Activated naive CD4-positive, alpha-beta T cell treated with anti-CD3 and anti-CD28 coated beads for 36 hours (primary cell): ENCODE measurements at regions of chr15 and their contacts with region 1.

Region 1: GRCh38 chr15:60585743-60586708 is 107.1 kb upstream of the ICE2 start:
- DNase-seq: peak; percentile 78
- H3K4me3 Mint-ChIP-seq: peak overlapping the region; percentile 30
- H3K27ac Mint-ChIP-seq: peak overlapping the region; percentile 69
- H3K4me1 Mint-ChIP-seq: peaks cover 77% of the 10 kb centered on the region
- H3K27me3 Mint-ChIP-seq: no peaks in the 10 kb centered on the region

Region 2: DNA sequence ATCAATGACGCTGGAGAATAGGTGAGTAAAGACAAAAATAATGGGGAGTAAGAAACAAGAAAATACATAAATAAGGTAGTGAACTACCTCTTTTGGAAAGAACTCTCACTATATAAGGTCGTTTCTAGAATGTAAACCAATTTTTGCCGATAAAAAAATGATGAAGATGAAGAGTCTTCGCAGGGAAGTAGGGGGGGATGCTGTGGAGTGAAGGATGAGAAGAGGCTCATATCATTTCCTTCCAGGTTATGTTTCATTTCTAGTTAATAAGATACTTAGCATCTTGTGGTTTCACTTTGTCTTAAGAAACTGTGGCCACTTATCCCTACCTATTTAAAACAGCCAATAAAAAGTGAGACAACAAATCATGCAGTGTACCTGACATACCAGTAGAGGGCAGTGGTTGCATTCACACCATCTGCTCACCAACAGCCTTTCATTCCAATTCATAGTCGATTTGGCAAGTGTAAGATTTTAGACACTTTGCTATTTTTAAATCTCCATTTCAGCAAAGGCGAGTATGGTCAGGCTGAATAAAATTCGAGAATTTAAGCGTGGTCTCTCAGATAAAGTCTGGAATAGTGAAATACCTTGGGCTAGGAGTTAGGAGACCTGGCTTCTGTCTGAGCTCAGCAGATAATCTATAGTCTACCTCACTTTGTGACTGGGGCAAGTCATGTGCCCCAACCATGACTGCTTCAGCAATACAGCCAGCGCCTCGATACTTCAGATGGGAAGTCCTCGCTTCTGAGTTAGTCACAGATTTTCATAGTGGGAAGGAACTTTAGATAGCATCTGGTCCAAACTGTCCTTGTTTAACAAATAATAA is 78.2 kb before region 1 on chr15:
- CTCF ChIA-PET with region 1: interaction called, 8 read pairs
- intact Hi-C with region 1: loop called (anchors 1 kb)
- DNase-seq: peak; percentile 70
- H3K4me3 Mint-ChIP-seq: no peak overlapping the region
- H3K27ac Mint-ChIP-seq: peak overlapping the region; percentile 68
- H3K4me1 Mint-ChIP-seq: peaks cover 48% of the 10 kb centered on the region
- H3K27me3 Mint-ChIP-seq: no peaks in the 10 kb centered on the region

Region 3: GRCh38 chr15:60540002-60540651 is 45.9 kb before region 1 on chr15:
- CTCF ChIA-PET with region 1: no interaction called
- intact Hi-C with region 1: no loop called
- DNase-seq: no peak
- H3K4me3 Mint-ChIP-seq: no peak overlapping the region
- H3K27ac Mint-ChIP-seq: peak overlapping the region; percentile 44
- H3K4me1 Mint-ChIP-seq: peaks cover 84% of the 10 kb centered on the region
- H3K27me3 Mint-ChIP-seq: no peaks in the 10 kb centered on the region

Region 4: DNA sequence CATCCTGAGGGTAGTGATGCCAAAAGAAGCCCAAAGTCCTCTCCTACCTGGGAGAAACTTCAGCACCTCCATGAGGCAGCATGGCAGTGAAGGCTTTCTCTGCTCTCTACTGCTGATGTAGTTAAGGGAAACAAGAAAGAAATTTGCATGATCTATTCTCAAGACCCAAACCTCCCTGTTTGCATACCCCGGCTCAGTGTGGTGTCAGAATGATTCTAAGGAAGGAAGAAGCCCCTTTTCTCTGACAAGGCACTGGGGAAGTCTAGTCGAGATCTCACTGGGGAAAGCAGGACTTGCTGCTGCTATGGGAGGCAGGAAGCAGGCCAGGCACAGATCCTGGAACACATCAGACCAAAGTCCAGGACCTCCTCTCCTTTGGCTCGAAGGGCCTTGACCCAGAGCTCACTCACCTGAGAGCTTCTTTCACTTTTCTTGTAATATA is 17.7 kb before region 1 on chr15:
- CTCF ChIA-PET with region 1: interaction called, 21 read pairs
- intact Hi-C with region 1: loop called (anchors 2 kb)
- DNase-seq: no peak
- H3K4me3 Mint-ChIP-seq: peak overlapping the region; percentile 8
- H3K27ac Mint-ChIP-seq: peak overlapping the region; percentile 57
- H3K4me1 Mint-ChIP-seq: peaks cover 86% of the 10 kb centered on the region
- H3K27me3 Mint-ChIP-seq: no peaks in the 10 kb centered on the region

Region 5: GRCh38 chr15:60620708-60621107 is 34.7 kb after region 1 on chr15:
- CTCF ChIA-PET with region 1: no interaction called
- intact Hi-C with region 1: no loop called
- DNase-seq: no peak
- H3K4me3 Mint-ChIP-seq: no peak overlapping the region
- H3K27ac Mint-ChIP-seq: no peak overlapping the region
- H3K4me1 Mint-ChIP-seq: no peaks in the 10 kb centered on the region
- H3K27me3 Mint-ChIP-seq: no peaks in the 10 kb centered on the region

Region 6: DNA sequence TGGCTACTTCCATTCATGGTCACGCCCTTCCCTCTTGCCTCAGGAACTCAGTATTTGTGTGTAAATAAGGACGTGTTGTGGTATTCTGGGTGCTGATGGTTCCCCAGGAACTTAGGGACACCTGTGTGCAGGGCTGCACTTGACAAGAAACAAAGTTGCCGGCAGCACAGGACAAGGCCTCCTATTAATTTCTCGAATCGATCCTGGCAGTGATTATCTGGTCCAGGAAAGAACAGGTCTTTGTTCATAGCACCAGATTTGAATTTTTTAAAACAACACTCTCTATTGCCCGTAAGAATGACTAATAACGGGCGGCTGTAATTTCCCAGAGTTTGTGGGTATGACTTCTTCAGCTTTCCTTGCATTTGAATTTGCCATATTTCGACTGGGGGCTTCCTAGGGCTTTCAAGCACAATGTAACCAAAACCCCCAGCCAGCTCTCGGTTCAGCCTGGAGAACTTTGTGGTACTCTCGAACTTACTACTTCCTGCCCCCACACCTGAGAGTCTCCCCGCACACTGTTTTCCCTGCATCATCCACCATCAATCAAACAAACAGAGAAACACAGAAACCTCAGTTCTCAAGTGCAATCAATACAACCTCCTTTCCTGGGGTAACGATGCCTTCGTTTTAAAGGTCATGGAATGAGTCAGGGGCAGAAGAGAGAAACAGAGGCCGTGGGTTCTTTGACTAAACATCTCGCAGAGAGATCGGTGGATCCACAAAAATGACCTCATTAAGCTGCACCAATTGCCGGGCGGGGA is 134.6 kb after region 1 on chr15:
- CTCF ChIA-PET with region 1: interaction called, 4 read pairs
- intact Hi-C with region 1: loop called (anchors 1 kb)
- DNase-seq: peak; percentile 90
- H3K4me3 Mint-ChIP-seq: peak overlapping the region; percentile 49
- H3K27ac Mint-ChIP-seq: peak overlapping the region; percentile 99
- H3K4me1 Mint-ChIP-seq: peaks cover 59% of the 10 kb centered on the region
- H3K27me3 Mint-ChIP-seq: no peaks in the 10 kb centered on the region

Region 7: DNA sequence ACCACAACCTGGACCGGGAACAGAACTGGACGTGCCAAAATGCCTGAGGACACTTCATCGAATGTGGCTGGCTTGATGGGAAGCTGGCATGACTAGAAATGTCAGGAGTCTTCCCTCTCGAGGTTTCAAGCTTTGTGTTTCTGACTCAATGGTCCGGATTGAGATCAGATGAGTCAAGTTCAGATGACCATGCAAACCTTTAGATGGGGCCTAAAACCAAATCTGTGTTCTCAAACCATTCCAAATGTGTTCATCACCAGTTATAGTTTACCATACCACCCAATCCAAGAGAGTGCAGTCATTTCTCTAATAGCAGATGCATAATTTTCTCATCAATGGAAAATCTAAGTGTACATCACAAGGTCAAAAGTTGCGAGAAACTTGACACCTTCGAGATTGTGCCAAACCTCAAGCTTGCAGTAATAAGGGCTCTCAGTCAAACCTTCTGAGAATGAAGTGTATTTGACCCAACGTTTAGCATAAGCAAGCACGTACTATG is 274.0 kb after region 1 on chr15:
- CTCF ChIA-PET with region 1: interaction called, 11 read pairs
- intact Hi-C with region 1: loop called (anchors 1 kb)
- DNase-seq: no peak
- H3K4me3 Mint-ChIP-seq: no peak overlapping the region
- H3K27ac Mint-ChIP-seq: peak overlapping the region; percentile 69
- H3K4me1 Mint-ChIP-seq: peaks cover 68% of the 10 kb centered on the region
- H3K27me3 Mint-ChIP-seq: no peaks in the 10 kb centered on the region

Region 8: GRCh38 chr15:60932051-60932915 is 346.3 kb after region 1 on chr15:
- CTCF ChIA-PET with region 1: interaction called, 11 read pairs
- intact Hi-C with region 1: no loop called
- DNase-seq: peak; percentile 71
- H3K4me3 Mint-ChIP-seq: no peak overlapping the region
- H3K27ac Mint-ChIP-seq: no peak overlapping the region
- H3K4me1 Mint-ChIP-seq: peaks cover 12% of the 10 kb centered on the region
- H3K27me3 Mint-ChIP-seq: peaks cover 10% of the 10 kb centered on the region